ENCODE measurements at regions of chr6 and their contacts with region 1.

Region 1: GRCh38 chr6:6547110-6547879 is 41.2 kb upstream of the LY86 start:
- DNase-seq: peak; percentile 88
- ATAC-seq: peak; percentile 98
- H3K4me3 Mint-ChIP-seq: peak overlapping the region; percentile 1
- H3K27ac Mint-ChIP-seq: no peak overlapping the region
- H3K4me1 Mint-ChIP-seq: peaks cover 13% of the 10 kb centered on the region
- H3K27me3 Mint-ChIP-seq: peaks cover 48% of the 10 kb centered on the region

Region 2: GRCh38 chr6:6057424-6058053 is 489.8 kb before region 1 on chr6:
- CTCF ChIA-PET with region 1: interaction called, 22 read pairs
- POLR2A ChIA-PET with region 1: no interaction called
- DNase-seq: peak; percentile 31
- ATAC-seq: no peak
- H3K4me3 Mint-ChIP-seq: no peak overlapping the region
- H3K27ac Mint-ChIP-seq: no peak overlapping the region
- H3K4me1 Mint-ChIP-seq: no peaks in the 10 kb centered on the region
- H3K27me3 Mint-ChIP-seq: peaks cover 20% of the 10 kb centered on the region

Region 3: GRCh38 chr6:6512711-6513110 is 34.6 kb before region 1 on chr6:
- CTCF ChIA-PET with region 1: interaction called, 12 read pairs
- POLR2A ChIA-PET with region 1: no interaction called
- DNase-seq: no peak
- ATAC-seq: no peak
- H3K4me3 Mint-ChIP-seq: no peak overlapping the region
- H3K27ac Mint-ChIP-seq: no peak overlapping the region
- H3K4me1 Mint-ChIP-seq: peaks cover 15% of the 10 kb centered on the region
- H3K27me3 Mint-ChIP-seq: peaks cover 59% of the 10 kb centered on the region

Region 4: GRCh38 chr6:6533176-6533575 is 14.1 kb before region 1 on chr6:
- CTCF ChIA-PET with region 1: interaction called, 19 read pairs
- POLR2A ChIA-PET with region 1: no interaction called
- DNase-seq: no peak
- ATAC-seq: no peak
- H3K4me3 Mint-ChIP-seq: no peak overlapping the region
- H3K27ac Mint-ChIP-seq: no peak overlapping the region
- H3K4me1 Mint-ChIP-seq: no peaks in the 10 kb centered on the region
- H3K27me3 Mint-ChIP-seq: peaks cover 30% of the 10 kb centered on the region

Region 5: GRCh38 chr6:6616656-6617055 is 69.4 kb after region 1 on chr6:
- CTCF ChIA-PET with region 1: no interaction called
- POLR2A ChIA-PET with region 1: no interaction called
- DNase-seq: no peak
- ATAC-seq: no peak
- H3K4me3 Mint-ChIP-seq: no peak overlapping the region
- H3K27ac Mint-ChIP-seq: no peak overlapping the region
- H3K4me1 Mint-ChIP-seq: peaks cover 67% of the 10 kb centered on the region
- H3K27me3 Mint-ChIP-seq: no peaks in the 10 kb centered on the region

Measured in activated CD8-positive, alpha-beta T cell treated with anti-CD3 and anti-CD28 coated beads, Interleukin-2, amount 10 ng/mL, durations not matched to agents 7 days and 5 days (primary cell).